SK-N-SH (cell line): ENCODE measurements at regions of chr5 and their contacts with region 1.

Region 1: GRCh38 chr5:73215891-73216610 is 43.1 kb downstream of the TMEM174 start:
- DNase-seq: peak; percentile 96
- H3K4me3 ChIP-seq: peak overlapping the region; percentile 49 to 66
- H3K27ac ChIP-seq: peak overlapping the region; percentile 47 to 69
- H3K4me1 ChIP-seq: peaks cover 9 to 16% of the 10 kb centered on the region in 2 experiments; a peak in 3 of 4 replicates
- H3K27me3 ChIP-seq: no peaks in the 10 kb centered on the region
- CTCF ChIP-seq: peak; percentile 76
- EP300 ChIP-seq: no peak
- RAD21 ChIP-seq: peak; percentile 58

Region 2: GRCh38 chr5:72673623-72674022 is 542.4 kb before region 1 on chr5:
- CTCF ChIA-PET with region 1: no interaction called
- POLR2A ChIA-PET with region 1: no interaction called
- DNase-seq: no peak
- H3K4me3 ChIP-seq: no peak overlapping the region
- H3K27ac ChIP-seq: no peak overlapping the region
- H3K4me1 ChIP-seq: no peaks in the 10 kb centered on the region
- H3K27me3 ChIP-seq: no peaks in the 10 kb centered on the region
- CTCF ChIP-seq: no peak
- EP300 ChIP-seq: no peak
- RAD21 ChIP-seq: no peak

Region 3: GRCh38 chr5:73201547-73202513 is 14.2 kb before region 1 on chr5:
- CTCF ChIA-PET with region 1: interaction called, 43 read pairs
- POLR2A ChIA-PET with region 1: no interaction called
- DNase-seq: peak; percentile 89
- H3K4me3 ChIP-seq: peak overlapping the region in 1 of 2 experiments; percentile 42; a peak in 2 of 4 replicates
- H3K27ac ChIP-seq: no peak overlapping the region
- H3K4me1 ChIP-seq: peaks cover 0 to 7% of the 10 kb centered on the region in 2 experiments; a peak in 3 of 4 replicates
- H3K27me3 ChIP-seq: no peaks in the 10 kb centered on the region
- CTCF ChIP-seq: peak; percentile 67
- EP300 ChIP-seq: no peak
- RAD21 ChIP-seq: peak; percentile 78

Region 4: GRCh38 chr5:73242718-73243117 is 26.7 kb after region 1 on chr5:
- CTCF ChIA-PET with region 1: interaction called, 14 read pairs
- POLR2A ChIA-PET with region 1: no interaction called
- DNase-seq: no peak
- H3K4me3 ChIP-seq: no peak overlapping the region
- H3K27ac ChIP-seq: no peak overlapping the region
- H3K4me1 ChIP-seq: no peaks in the 10 kb centered on the region
- H3K27me3 ChIP-seq: no peaks in the 10 kb centered on the region
- CTCF ChIP-seq: no peak
- EP300 ChIP-seq: no peak
- RAD21 ChIP-seq: no peak

Region 5: DNA sequence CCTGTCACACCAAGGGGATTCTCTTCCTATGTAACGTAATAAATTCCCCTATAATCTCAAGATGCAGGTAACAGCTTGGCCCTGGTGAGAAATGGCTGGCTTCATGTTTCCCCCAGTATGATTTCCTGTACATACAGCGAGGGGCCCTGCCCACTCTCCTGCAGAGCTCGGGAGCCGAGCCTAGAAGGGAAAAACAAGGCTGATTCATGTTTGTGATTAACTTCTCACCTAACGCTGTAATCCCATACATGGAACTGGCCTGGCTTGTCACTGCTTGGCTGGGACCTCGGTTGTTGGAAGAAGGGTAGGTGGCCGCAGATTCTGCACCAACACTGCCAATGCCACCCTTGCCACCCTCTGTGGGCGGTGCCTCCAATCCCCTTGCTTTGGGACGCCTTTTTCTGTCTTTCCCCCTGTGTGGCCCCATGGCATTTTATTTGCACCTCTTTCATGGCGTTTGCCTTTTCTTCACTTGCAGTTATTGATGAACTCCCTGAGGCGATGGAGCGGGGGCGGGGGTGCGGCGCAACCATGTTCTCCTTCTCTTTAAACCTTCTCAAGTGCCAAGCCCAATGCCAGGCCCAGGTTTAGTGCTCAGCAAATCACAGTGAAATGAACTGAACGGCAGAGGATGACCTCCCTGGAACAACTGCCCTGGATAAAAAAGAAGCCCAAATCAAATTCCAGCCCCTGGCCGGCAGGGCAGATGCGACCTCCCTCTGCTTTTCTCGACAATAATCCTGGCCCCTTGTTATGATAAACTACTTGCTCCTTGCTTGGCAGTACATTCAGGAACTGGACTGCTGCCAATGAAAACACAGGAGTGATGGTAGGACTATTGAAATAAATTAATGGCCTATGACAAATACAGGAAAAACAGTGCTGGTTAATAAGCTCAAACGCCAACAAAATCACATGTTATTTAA is 65.0 kb after region 1 on chr5:
- CTCF ChIA-PET with region 1: interaction called, 14 read pairs
- POLR2A ChIA-PET with region 1: no interaction called
- DNase-seq: peak; percentile 50
- H3K4me3 ChIP-seq: no peak overlapping the region
- H3K27ac ChIP-seq: peak overlapping the region; percentile 14 to 19; a peak in 2 of 4 replicates
- H3K4me1 ChIP-seq: peaks cover 11 to 14% of the 10 kb centered on the region in 2 experiments
- H3K27me3 ChIP-seq: no peaks in the 10 kb centered on the region
- CTCF ChIP-seq: no peak
- EP300 ChIP-seq: peak in 1 of 2 experiments; percentile 35; a peak in 1 of 4 replicates
- RAD21 ChIP-seq: no peak

Region 6: GRCh38 chr5:73312146-73312871 is 96.3 kb after region 1 on chr5:
- CTCF ChIA-PET with region 1: interaction called, 11 read pairs
- POLR2A ChIA-PET with region 1: no interaction called
- DNase-seq: no peak
- H3K4me3 ChIP-seq: no peak overlapping the region
- H3K27ac ChIP-seq: peak overlapping the region; percentile 29 to 98
- H3K4me1 ChIP-seq: peaks cover 5 to 40% of the 10 kb centered on the region in 2 experiments
- H3K27me3 ChIP-seq: no peaks in the 10 kb centered on the region
- CTCF ChIP-seq: peak; percentile 65
- EP300 ChIP-seq: peak in 1 of 2 experiments; percentile 26; a peak in 1 of 4 replicates
- RAD21 ChIP-seq: peak; percentile 38

Region 7: DNA sequence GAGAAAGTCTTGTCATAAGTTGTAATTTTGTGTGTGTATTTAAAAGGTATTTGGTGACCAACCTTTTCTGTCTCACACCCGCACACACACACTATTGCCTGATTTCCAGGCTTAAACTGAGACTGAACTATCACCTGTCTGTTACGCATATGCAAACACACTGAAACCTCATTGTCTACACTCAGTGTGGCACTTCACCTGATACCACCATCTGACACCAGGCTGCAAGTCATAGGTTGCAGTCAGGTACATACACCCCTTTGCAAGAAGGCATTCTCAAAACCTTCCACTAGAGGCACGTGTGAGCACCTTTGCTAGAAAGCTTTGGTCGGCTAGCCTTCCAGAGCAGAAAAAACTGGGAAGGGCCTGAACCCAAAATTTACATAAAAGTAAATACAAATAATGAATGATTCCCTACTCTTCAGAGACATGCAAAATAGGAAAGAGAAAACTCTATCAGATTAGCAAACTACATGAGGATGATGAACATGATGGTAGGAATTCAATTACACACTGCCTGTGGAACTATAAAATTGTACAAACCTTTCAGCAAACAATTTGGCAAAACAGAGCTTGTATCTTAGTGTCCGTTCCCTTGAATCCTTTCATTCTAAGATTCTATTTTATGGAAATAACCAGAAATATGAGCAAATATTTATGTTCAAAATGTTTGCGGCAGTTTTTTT is 238.4 kb after region 1 on chr5:
- CTCF ChIA-PET with region 1: interaction called, 42 read pairs
- POLR2A ChIA-PET with region 1: no interaction called
- DNase-seq: peak; percentile 52
- H3K4me3 ChIP-seq: peak overlapping the region in 1 of 2 experiments; percentile 22; a peak in 1 of 4 replicates
- H3K27ac ChIP-seq: no peak overlapping the region
- H3K4me1 ChIP-seq: peaks cover 5 to 7% of the 10 kb centered on the region in 2 experiments; a peak in 1 of 4 replicates
- H3K27me3 ChIP-seq: no peaks in the 10 kb centered on the region
- CTCF ChIP-seq: peak; percentile 81
- EP300 ChIP-seq: no peak
- RAD21 ChIP-seq: peak; percentile 49